GM12878 (cell line): ENCODE measurements at regions of chr11 and their contacts with region 1.

Region 1: GRCh38 chr11:83007909-83008580 is 63.7 kb downstream of the RAB30 start:
- DNase-seq: no peak
- ATAC-seq: peak; percentile 73
- H3K4me3 ChIP-seq: peak overlapping the region; percentile 24; the same call in 1 of the 2 replicates
- H3K27ac ChIP-seq: peak overlapping the region; percentile 67
- H3K4me1 ChIP-seq: peaks cover 26% of the 10 kb centered on the region
- H3K27me3 ChIP-seq: no peaks in the 10 kb centered on the region
- CTCF ChIP-seq: peak in 1 of 3 experiments; percentile 10; a peak in 1 of 6 replicates
- EP300 ChIP-seq: no peak
- POLR2A ChIP-seq: no peak
- RAD21 ChIP-seq: no peak

Region 2: DNA sequence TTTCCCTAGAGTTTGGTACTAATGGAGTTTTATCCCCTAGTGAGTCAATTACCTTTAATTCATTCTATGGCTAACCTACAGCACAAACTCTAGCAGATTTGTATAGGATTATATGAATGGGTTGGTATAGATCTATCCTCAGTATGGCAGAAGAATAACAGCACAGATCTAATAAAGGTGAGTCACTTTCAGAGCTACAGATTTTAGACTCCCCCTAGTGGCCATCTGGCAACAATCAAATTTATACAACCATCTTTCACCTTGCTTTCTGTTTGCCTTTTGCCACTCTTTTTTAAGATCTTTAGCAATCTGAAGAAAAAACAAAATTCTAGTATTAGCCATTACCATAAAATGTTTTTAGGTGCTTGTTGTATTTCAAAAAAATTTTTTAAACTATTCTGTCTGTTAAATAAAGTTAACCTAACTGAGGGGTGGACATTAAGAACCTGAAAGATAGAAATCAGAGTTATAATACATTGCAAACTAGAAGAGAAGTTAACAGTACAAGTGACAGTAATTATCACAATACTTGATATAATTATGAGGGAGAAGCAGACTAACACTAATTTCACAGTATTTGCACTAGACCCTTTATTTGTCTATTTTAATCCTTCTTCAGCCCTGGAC is 80.7 kb before region 1 on chr11:
- CTCF ChIA-PET with region 1: interaction called, 4 read pairs
- POLR2A ChIA-PET with region 1: interaction called, 7 read pairs
- RAD21 ChIA-PET with region 1: interaction called, 7 read pairs
- SMC1A ChIA-PET with region 1: interaction called, 10 read pairs
- in situ Hi-C with region 1: no loop called
- intact Hi-C with region 1: loop called (anchors 5 kb)
- DNase-seq: no peak
- ATAC-seq: peak; percentile 93
- H3K4me3 ChIP-seq: no peak overlapping the region
- H3K27ac ChIP-seq: no peak overlapping the region; the same call in 1 of the 2 replicates
- H3K4me1 ChIP-seq: peaks cover 20% of the 10 kb centered on the region
- H3K27me3 ChIP-seq: no peaks in the 10 kb centered on the region
- CTCF ChIP-seq: peak; percentile 73 to 77 (median 76)
- EP300 ChIP-seq: no peak
- POLR2A ChIP-seq: no peak
- RAD21 ChIP-seq: peak; percentile 63

Region 3: GRCh38 chr11:83019888-83020579 is 12.0 kb after region 1 on chr11:
- CTCF ChIA-PET with region 1: interaction called, 8 read pairs
- POLR2A ChIA-PET with region 1: interaction called, 5 read pairs
- RAD21 ChIA-PET with region 1: interaction called, 6 read pairs
- SMC1A ChIA-PET with region 1: interaction called, 15 read pairs
- in situ Hi-C with region 1: no loop called
- intact Hi-C with region 1: no loop called
- DNase-seq: no peak
- ATAC-seq: no peak
- H3K4me3 ChIP-seq: no peak overlapping the region
- H3K27ac ChIP-seq: no peak overlapping the region
- H3K4me1 ChIP-seq: peaks cover 16% of the 10 kb centered on the region
- H3K27me3 ChIP-seq: no peaks in the 10 kb centered on the region
- CTCF ChIP-seq: no peak
- EP300 ChIP-seq: no peak
- POLR2A ChIP-seq: no peak
- RAD21 ChIP-seq: no peak

Region 4: GRCh38 chr11:83044958-83045712 is 37.1 kb after region 1 on chr11:
- CTCF ChIA-PET with region 1: interaction called, 5 read pairs
- POLR2A ChIA-PET with region 1: no interaction called
- RAD21 ChIA-PET with region 1: interaction called, 8 read pairs
- SMC1A ChIA-PET with region 1: interaction called, 35 read pairs
- in situ Hi-C with region 1: no loop called
- intact Hi-C with region 1: no loop called
- DNase-seq: no peak
- ATAC-seq: peak; percentile 85
- H3K4me3 ChIP-seq: no peak overlapping the region
- H3K27ac ChIP-seq: no peak overlapping the region
- H3K4me1 ChIP-seq: peaks cover 8% of the 10 kb centered on the region
- H3K27me3 ChIP-seq: no peaks in the 10 kb centered on the region
- CTCF ChIP-seq: no peak
- EP300 ChIP-seq: no peak
- POLR2A ChIP-seq: no peak
- RAD21 ChIP-seq: no peak

Region 5: DNA sequence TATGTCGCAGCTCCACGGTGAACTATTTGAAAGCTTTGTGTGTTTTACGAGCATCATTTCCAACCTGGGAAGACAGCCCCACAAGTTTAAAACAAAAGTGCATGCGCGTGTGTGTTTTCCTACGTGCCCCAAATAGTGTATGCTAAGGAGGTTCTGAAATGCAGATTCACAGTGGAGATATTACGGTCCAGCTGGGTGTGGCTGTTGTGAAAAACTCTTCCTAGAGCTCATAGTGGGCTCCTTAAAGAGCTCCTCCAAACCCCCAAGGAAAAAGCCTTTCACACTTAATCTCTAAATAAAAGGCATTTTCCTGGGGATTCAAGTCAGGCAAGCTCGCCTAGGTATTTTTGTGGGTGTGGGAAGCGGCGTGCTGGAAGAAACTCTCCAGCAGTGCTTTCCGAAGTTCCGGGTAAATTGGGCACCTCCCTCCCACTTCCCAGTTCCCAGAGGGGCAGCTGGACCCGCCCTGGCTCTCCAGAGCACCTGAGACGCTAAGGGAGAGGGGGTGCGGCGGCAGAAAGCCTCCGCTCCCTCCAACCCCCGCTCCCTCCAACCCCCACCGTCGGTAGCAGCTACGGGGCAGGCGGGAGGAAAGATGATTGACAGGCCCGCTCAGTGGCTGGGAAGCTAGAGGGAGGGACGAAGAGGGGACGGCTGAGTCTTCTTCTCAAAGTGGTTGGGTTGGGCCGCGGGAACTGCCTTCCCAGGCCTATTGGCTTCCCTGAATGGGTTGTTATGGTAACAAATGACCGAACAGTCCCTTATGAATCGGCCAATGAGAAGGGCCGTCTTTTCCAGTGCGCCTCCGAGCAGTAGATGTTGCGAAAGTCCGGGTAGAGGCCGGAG is 148.3 kb after region 1 on chr11:
- CTCF ChIA-PET with region 1: interaction called, 5 read pairs
- POLR2A ChIA-PET with region 1: interaction called, 16 read pairs
- RAD21 ChIA-PET with region 1: interaction called, 3 read pairs
- SMC1A ChIA-PET with region 1: interaction called, 11 read pairs
- in situ Hi-C with region 1: no loop called
- intact Hi-C with region 1: no loop called
- DNase-seq: peak; percentile 100
- ATAC-seq: peak; percentile 89
- H3K4me3 ChIP-seq: peak overlapping the region; percentile 80
- H3K27ac ChIP-seq: peak overlapping the region; percentile 85
- H3K4me1 ChIP-seq: peaks cover 3% of the 10 kb centered on the region; the same call in 1 of the 2 replicates
- H3K27me3 ChIP-seq: no peaks in the 10 kb centered on the region
- CTCF ChIP-seq: no peak
- EP300 ChIP-seq: no peak; a peak in 1 of 4 replicates
- POLR2A ChIP-seq: no peak
- RAD21 ChIP-seq: no peak